Adrenal gland (tissue), 19 donors: ENCODE measurements at regions of chr17 and their contacts with region 1.

Region 1: GRCh38 chr17:66152756-66153155 is 39.2 kb downstream of the CEP112 start:
- DNase-seq: no peak
- H3K4me3 ChIP-seq: no peak overlapping the region
- H3K27ac ChIP-seq: no peak overlapping the region
- H3K4me1 ChIP-seq: no peaks in the 10 kb centered on the region
- H3K27me3 ChIP-seq: no peaks in the 10 kb centered on the region
- CTCF ChIP-seq: no peak
- POLR2A ChIP-seq: no peak

Region 2: GRCh38 chr17:65231662-65232335 is 921.0 kb before region 1 on chr17:
- intact Hi-C with region 1: loop called in 1 of 2 experiments (anchors 5 kb)
- DNase-seq: peak; percentile 59 to 75 (median 71)
- H3K4me3 ChIP-seq: no peak overlapping the region
- H3K27ac ChIP-seq: no peak overlapping the region
- H3K4me1 ChIP-seq: peaks cover 0 to 18% of the 10 kb centered on the region in 2 donors
- H3K27me3 ChIP-seq: no peaks in the 10 kb centered on the region
- CTCF ChIP-seq: peak; percentile 23 to 77 (median 69)
- POLR2A ChIP-seq: no peak